ENCODE measurements at regions of chr7 and their contacts with region 1.

Region 1: GRCh38 chr7:50418086-50418515 is 32.0 kb downstream of the FIGNL1 start:
- DNase-seq: peak; percentile 75
- CTCF ChIP-seq: peak; percentile 97

Region 2: DNA sequence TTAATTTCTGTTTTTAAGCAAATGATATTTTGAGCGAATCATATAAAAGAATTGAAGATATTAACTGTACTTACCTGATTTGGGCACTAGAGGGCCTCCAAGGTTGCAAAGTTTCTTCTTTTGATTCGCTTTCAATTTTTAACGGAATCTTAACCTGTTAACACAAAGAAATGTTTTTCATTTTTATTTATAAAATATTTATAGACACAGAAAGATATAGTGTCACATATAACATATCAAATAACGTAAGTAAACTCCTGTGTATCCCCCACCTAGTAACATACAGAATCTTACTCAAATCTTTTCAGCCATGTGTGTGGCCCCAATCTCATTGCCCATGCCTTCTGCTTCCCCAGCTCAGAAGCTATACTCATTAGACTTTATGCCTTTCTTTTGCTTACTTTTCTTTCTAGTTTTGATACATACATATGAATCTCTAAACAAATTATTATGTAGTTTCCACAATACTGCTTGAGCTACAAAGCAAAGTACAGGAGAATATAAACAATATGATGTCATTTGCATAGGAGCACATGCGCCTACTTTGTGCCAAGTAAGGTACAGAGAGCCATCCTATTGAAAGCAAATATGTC is 275.6 kb before region 1 on chr7:
- CTCF ChIA-PET with region 1: interaction called, 34 read pairs
- POLR2A ChIA-PET with region 1: no interaction called
- DNase-seq: no peak
- CTCF ChIP-seq: peak; percentile 67

Region 3: GRCh38 chr7:50199824-50200223 is 218.3 kb before region 1 on chr7:
- CTCF ChIA-PET with region 1: interaction called, 99 read pairs
- POLR2A ChIA-PET with region 1: no interaction called
- DNase-seq: no peak
- CTCF ChIP-seq: no peak

Region 4: DNA sequence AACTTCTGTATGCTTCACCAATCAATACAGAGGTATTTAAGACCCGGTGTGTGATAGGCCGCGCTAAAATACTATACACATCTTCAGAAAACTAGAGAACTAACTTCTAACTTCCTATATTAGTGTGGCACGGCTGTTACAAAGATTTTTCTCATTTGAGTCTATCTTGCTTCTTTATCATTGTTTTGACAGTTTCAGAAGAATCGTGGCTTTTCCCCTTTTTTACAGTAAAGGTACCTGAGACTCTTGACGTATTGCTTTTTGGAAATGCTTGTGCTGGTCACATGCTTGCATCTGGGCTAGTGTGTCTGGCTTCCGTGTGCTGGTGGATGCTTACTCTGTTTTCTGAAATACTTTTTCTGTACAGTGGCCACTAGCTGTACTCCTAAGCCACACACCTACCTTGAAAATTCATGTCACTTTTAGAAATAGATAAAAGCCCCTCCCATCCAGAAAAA is 100.9 kb before region 1 on chr7:
- CTCF ChIA-PET with region 1: interaction called, 18 read pairs
- POLR2A ChIA-PET with region 1: no interaction called
- DNase-seq: peak; percentile 56
- CTCF ChIP-seq: no peak

Region 5: GRCh38 chr7:50379082-50379481 is 39.0 kb before region 1 on chr7:
- CTCF ChIA-PET with region 1: interaction called, 11 read pairs
- POLR2A ChIA-PET with region 1: no interaction called
- DNase-seq: no peak
- CTCF ChIP-seq: no peak

Region 6: GRCh38 chr7:50436133-50436806 is 18.2 kb after region 1 on chr7:
- CTCF ChIA-PET with region 1: interaction called, 16 read pairs
- POLR2A ChIA-PET with region 1: no interaction called
- DNase-seq: no peak
- CTCF ChIP-seq: no peak